Pancreas (tissue), 10 donors: ENCODE measurements at regions of chr18 and their contacts with region 1.

Region 1: GRCh38 chr18:26574958-26575864 is 26.9 kb upstream of the KCTD1 start:
- DNase-seq: peak; percentile 9 to 73 (median 39)
- ATAC-seq: peak; percentile 64 to 83 (median 80)
- H3K4me3 ChIP-seq: peak overlapping the region in 3 of 4 donors; percentile 12 to 44 (median 32)
- H3K27ac ChIP-seq: no peak overlapping the region
- H3K4me1 ChIP-seq: peaks cover 0 to 7% (median 4%) of the 10 kb centered on the region in 3 donors
- H3K27me3 ChIP-seq: no peaks in the 10 kb centered on the region
- CTCF ChIP-seq: no peak

Region 2: GRCh38 chr18:26370037-26370436 is 205.2 kb before region 1 on chr18:
- intact Hi-C with region 1: no loop called
- DNase-seq: no peak
- ATAC-seq: no peak
- H3K4me3 ChIP-seq: no peak overlapping the region
- H3K27ac ChIP-seq: no peak overlapping the region
- H3K4me1 ChIP-seq: no peaks in the 10 kb centered on the region
- H3K27me3 ChIP-seq: no peaks in the 10 kb centered on the region
- CTCF ChIP-seq: no peak

Region 3: DNA sequence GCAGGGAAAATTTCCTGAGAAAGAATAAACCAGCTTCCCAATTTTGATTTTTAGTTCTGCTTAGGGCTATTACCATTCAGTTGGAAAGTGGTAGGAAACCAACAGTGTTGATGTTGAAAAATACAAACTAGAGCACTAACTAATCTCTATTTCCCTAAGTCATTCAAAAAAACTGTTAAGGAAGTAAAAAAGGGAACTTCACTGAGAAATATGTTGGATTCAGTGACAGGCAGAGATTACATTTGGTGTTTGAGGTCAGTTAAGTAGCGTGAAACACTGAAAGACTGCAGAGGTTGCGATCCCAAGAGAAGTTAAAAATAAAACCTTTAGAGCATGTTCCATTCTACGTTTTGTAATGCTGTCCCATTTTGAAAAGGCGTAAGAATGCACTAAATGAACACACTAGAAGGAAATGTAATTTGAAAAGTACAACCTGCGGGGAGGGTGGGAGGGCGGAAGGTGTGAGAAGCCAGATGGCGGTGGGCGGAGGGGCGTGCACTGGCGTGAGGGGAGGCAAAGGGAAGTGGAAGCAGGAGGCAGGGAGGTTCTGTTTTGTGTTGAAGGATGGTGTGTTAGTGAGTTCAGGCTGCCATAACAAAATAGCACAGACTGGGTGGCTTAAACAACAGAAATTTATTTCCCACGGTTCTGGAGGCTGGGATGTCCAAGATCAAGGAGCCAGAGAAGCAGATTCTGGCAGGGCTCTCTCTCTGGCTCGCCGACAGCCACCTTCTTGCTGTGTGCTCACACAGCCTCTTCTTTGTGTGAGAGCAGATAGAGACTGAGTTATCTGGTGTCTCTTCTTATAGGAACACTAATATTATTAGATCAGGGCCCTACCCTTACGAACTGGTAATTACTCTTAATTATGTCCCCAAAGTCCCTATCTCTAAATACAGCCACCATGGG is 67.5 kb after region 1 on chr18:
- intact Hi-C with region 1: loop called in 1 of 3 experiments (anchors 10 kb)
- DNase-seq: no peak
- ATAC-seq: peak in 2 of 4 donors; percentile 12 to 48
- H3K4me3 ChIP-seq: no peak overlapping the region
- H3K27ac ChIP-seq: no peak overlapping the region
- H3K4me1 ChIP-seq: no peaks in the 10 kb centered on the region
- H3K27me3 ChIP-seq: no peaks in the 10 kb centered on the region
- CTCF ChIP-seq: no peak

Region 4: GRCh38 chr18:26827581-26827980 is 252.4 kb after region 1 on chr18:
- intact Hi-C with region 1: no loop called
- DNase-seq: no peak
- ATAC-seq: no peak
- H3K4me3 ChIP-seq: no peak overlapping the region
- H3K27ac ChIP-seq: no peak overlapping the region
- H3K4me1 ChIP-seq: no peaks in the 10 kb centered on the region
- H3K27me3 ChIP-seq: no peaks in the 10 kb centered on the region
- CTCF ChIP-seq: no peak